ENCODE measurements at regions of chr11 and their contacts with region 1.

Region 1: DNA sequence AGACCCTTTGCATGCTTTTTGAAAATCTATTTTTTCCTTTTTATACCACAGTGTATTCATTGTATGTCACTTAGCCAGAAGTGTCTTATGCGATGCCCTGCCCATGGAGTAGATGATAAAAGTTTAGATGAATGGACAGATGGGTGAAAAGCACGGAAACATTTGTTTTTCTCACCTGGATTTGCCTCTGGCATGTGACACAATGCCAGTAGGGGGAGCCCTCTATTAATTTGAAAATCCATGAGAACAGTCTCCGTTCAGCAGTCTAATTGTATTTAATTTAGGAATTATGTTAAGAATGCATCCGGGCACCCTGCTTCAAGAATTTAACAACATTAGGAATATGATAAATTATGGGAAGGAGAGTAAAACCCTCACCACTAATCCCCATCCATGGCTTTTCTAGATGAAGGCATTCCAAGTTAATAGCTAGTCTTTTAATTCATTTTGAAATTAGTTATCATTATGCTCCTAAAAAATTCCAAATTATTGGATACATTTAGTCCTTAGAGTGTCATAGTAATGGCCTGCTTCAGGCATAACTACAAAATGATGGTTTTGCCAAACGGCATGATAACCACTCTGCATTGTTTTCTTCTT is 55.3 kb upstream of the ALKBH3 start:
- DNase-seq: peak; percentile 45
- H3K4me3 ChIP-seq: no peak overlapping the region
- H3K27ac ChIP-seq: no peak overlapping the region
- H3K4me1 ChIP-seq: peaks cover 3% of the 10 kb centered on the region
- H3K27me3 ChIP-seq: no peaks in the 10 kb centered on the region
- CTCF ChIP-seq: peak; percentile 54 to 61
- POLR2A ChIP-seq: no peak

Region 2: DNA sequence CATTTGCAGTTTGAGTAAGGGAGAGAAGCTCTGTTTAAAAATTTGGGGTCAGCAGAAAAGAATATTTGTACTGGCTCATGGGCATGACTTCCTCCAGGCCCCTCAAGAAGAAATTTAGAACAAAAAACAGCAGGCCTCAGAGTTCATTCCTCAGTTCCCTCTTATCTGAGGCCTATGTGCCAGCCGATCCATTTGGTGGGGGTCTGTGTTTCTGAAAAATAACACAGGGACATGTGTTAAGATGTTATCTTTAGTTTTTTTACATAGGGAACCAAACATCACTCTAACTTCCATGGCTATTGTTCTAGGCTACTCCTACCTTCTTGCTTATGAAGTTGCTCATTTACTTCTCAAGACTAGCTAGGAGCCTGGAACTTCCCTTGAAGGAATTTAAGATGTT is 161.0 kb before region 1 on chr11:
- CTCF ChIA-PET with region 1: no interaction called
- POLR2A ChIA-PET with region 1: no interaction called
- dilution Hi-C with region 1: no loop called
- intact Hi-C with region 1: no loop called
- DNase-seq: no peak
- H3K4me3 ChIP-seq: no peak overlapping the region
- H3K27ac ChIP-seq: no peak overlapping the region
- H3K4me1 ChIP-seq: no peaks in the 10 kb centered on the region
- H3K27me3 ChIP-seq: peaks cover 6 to 15% of the 10 kb centered on the region in 2 experiments
- CTCF ChIP-seq: no peak
- POLR2A ChIP-seq: no peak

Region 3: DNA sequence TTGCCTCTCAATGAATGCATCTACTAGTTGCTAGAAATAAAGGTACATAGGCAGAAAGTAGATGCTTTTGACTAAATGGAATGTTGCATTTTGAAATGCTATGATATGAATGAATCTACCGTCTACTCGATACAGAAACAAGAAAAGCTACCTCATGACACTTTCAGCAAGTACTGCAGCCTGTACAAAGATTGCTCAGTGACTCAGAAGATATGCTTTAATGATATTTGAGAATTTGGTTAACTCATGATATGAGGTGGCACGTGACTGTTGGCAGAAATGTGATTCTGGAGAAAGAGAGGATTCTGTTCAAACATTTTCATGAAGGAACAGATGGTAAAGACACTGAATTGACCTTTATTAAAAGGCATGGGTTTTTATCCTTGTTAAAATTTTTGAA is 68.7 kb before region 1 on chr11:
- CTCF ChIA-PET with region 1: no interaction called
- POLR2A ChIA-PET with region 1: no interaction called
- dilution Hi-C with region 1: no loop called
- intact Hi-C with region 1: no loop called
- DNase-seq: no peak
- H3K4me3 ChIP-seq: no peak overlapping the region
- H3K27ac ChIP-seq: no peak overlapping the region
- H3K4me1 ChIP-seq: no peaks in the 10 kb centered on the region
- H3K27me3 ChIP-seq: no peaks in the 10 kb centered on the region
- CTCF ChIP-seq: no peak
- POLR2A ChIP-seq: no peak

Region 4: DNA sequence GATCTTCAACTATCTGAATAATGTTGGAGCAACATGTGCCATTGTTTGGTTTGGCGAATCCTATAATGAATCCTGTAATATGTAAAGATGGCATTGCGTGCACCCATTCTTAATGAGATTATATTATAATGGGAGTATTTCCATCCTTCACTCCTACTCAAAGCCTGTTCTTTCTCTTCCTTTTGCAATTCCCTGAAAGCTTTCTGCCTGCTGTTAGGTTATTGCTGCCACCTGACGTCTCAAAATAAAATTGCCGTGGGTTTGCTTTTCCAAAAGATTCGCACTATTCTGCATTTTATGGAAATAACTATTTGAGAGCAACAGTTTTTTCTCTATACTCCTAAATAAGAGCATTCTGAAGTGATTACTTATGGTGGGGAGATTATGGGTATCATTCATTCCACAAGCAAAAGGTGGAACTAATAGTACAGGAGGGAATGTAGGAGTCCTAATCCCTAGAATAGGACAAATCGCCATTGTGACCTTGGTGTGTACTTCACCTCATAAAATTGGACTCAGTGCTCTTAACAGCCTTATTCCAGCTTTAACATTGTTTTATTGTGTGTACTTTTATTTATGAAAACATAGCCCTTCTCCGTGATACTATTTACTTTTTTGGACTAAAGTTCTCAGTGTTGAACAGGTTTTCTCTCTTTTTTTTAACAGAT is 14.3 kb before region 1 on chr11:
- CTCF ChIA-PET with region 1: interaction called, 18 read pairs
- POLR2A ChIA-PET with region 1: no interaction called
- dilution Hi-C with region 1: no loop called
- intact Hi-C with region 1: no loop called
- DNase-seq: no peak
- H3K4me3 ChIP-seq: no peak overlapping the region
- H3K27ac ChIP-seq: no peak overlapping the region
- H3K4me1 ChIP-seq: no peaks in the 10 kb centered on the region
- H3K27me3 ChIP-seq: no peaks in the 10 kb centered on the region
- CTCF ChIP-seq: no peak
- POLR2A ChIP-seq: no peak

Region 5: DNA sequence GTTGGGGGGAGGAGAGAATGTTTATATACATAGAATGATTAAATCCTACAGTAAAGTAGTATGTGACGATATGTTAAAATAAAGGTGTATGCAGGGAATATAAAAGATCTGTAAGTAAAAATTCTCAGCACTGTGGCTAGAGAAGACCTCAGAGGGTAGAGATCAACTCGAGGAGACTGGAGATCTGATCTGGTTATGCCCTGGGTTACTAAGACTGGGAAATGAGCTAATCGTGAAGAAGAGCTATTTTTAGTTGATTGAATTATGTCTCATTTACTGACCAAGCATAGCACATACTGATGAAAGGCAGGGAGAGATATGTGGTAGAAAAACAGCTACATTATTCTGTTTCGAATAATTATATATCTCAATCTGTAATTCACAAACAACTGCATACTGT is 12.6 kb after region 1 on chr11:
- CTCF ChIA-PET with region 1: interaction called, 16 read pairs
- POLR2A ChIA-PET with region 1: no interaction called
- dilution Hi-C with region 1: no loop called
- intact Hi-C with region 1: no loop called
- DNase-seq: no peak
- H3K4me3 ChIP-seq: no peak overlapping the region
- H3K27ac ChIP-seq: no peak overlapping the region
- H3K4me1 ChIP-seq: no peaks in the 10 kb centered on the region
- H3K27me3 ChIP-seq: no peaks in the 10 kb centered on the region
- CTCF ChIP-seq: no peak
- POLR2A ChIP-seq: no peak

Region 6: DNA sequence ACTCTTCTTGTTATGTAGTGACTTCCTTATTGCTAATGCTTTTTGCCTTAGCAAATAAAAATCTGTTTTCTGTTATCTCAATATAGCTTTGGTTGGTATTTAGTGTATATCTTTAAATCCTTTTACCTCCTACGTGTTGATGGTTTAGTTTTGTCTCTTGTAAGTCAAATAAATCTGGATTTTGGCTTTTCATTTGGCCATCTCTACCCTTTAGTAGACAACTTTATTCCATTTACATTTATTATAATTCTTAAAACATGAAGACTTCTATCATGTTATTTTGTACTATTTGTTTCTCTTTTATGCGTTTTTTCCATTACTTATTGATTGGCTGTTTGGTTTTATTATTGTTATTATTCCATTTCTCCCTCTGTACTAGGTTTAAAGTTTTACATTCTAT is 35.8 kb after region 1 on chr11:
- CTCF ChIA-PET with region 1: no interaction called
- POLR2A ChIA-PET with region 1: no interaction called
- dilution Hi-C with region 1: no loop called
- intact Hi-C with region 1: no loop called
- DNase-seq: no peak
- H3K4me3 ChIP-seq: no peak overlapping the region
- H3K27ac ChIP-seq: no peak overlapping the region
- H3K4me1 ChIP-seq: no peaks in the 10 kb centered on the region
- H3K27me3 ChIP-seq: no peaks in the 10 kb centered on the region
- CTCF ChIP-seq: no peak
- POLR2A ChIP-seq: no peak

Region 7: DNA sequence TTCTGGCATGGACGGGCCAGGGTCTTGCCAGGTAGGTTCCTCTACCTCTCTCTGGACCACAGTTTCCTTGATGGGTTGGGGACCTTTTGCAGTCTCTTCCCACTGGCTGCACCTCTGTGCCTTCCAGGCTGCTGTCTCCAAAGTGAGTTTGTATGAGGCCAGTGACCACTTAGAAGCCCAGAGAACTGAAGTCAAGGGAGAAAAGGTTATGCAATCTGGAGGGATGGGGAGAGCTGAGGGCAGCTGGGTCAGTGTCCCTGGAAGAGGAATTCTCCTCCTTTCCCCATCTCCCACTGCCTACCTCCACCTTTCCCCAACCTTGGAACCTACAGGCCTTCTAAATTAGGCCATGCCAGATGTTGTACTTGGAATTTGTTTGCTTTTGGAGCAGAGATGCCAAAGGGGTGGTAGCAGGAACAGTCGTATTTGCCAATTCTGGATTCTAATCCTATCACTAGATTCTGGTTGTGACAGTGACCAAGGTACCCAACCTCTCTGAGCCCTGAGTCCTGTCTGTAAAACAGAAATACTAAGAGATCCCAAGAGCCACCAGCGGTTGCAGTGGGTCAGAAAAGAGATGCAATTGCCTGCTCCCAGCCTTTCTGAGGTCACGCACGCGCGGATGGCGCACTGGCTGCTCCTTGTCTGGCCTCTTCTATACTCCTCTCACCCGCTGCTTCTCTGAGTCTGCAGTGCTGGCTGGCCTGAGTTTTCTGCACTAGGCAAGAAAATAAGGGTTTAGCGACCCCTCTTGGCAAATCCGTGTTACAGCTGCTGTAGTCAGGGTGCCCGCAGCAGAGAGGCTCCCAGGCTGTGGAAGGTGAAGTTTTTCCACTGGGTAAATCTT is 211.7 kb after region 1 on chr11:
- CTCF ChIA-PET with region 1: interaction called, 13 read pairs
- POLR2A ChIA-PET with region 1: no interaction called
- dilution Hi-C with region 1: no loop called
- intact Hi-C with region 1: no loop called
- DNase-seq: peak; percentile 65
- H3K4me3 ChIP-seq: no peak overlapping the region
- H3K27ac ChIP-seq: no peak overlapping the region
- H3K4me1 ChIP-seq: no peaks in the 10 kb centered on the region
- H3K27me3 ChIP-seq: peaks cover 3 to 6% of the 10 kb centered on the region in 2 experiments
- CTCF ChIP-seq: peak; percentile 75 to 82
- POLR2A ChIP-seq: no peak

Region 8: GRCh38 chr11:44057340-44057739 is 232.0 kb after region 1 on chr11:
- CTCF ChIA-PET with region 1: no interaction called
- POLR2A ChIA-PET with region 1: no interaction called
- dilution Hi-C with region 1: no loop called
- intact Hi-C with region 1: no loop called
- DNase-seq: no peak
- H3K4me3 ChIP-seq: no peak overlapping the region
- H3K27ac ChIP-seq: no peak overlapping the region
- H3K4me1 ChIP-seq: no peaks in the 10 kb centered on the region
- H3K27me3 ChIP-seq: peaks cover 6 to 11% of the 10 kb centered on the region in 2 experiments
- CTCF ChIP-seq: no peak
- POLR2A ChIP-seq: no peak